ENCODE measurements at regions of chr19 and their contacts with region 1.

Region 1: DNA sequence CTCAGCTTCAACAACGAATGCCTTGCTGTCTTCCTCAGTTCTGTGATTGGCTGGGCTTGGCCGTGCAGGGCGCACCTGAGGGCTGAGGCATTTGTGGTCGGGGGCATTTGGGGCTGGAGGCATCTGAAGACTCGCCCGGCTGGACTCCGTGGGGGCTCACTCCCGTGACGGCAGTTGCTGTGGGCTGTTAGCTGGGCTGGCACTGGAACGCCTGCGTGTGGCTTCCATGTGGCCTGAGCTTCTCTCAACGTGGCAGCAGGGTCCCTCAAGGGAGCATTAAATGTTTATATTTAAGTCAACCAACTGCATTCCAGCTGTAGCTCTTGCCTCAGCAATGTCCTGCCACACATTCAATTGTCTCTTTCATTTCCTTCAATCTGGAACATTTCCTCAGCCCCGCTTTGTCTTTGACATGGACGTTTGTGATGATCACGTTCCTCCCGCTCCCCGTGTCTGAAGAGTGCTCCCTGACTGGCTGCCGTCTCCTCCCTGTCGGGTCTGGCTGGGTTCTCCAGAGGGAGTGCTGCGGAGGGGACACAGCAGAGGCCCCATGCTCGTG is 21.0 kb downstream of the CCDC8 start:
- DNase-seq: no peak
- H3K4me3 ChIP-seq: peak overlapping the region; percentile 22; the same call in 1 of the 2 replicates
- H3K27ac ChIP-seq: peak overlapping the region; percentile 78
- H3K27me3 ChIP-seq: no peaks in the 10 kb centered on the region
- CTCF ChIP-seq: no peak

Region 2: DNA sequence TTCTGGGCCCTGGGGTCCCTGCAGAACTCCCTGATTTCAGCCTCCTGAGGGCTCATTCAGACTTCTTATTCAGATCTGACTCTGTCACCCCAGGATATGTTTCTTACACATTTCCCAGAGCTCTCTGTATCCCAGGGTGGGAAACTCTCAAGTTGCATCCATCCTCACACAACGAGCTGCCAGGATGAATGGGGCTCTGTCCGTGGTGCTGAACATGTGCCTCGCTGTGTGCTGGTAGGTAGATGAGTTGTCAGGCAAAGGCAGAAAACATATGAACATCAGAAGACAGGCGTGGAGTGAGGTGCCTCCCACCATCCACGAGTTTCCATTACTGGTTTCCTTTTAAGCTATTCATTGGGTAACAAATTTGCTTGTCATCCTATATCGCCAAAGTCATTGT is 174.2 kb before region 1 on chr19:
- CTCF ChIA-PET with region 1: no interaction called
- POLR2A ChIA-PET with region 1: no interaction called
- DNase-seq: no peak
- H3K4me3 ChIP-seq: no peak overlapping the region
- H3K27ac ChIP-seq: no peak overlapping the region
- H3K27me3 ChIP-seq: peaks cover 6% of the 10 kb centered on the region
- CTCF ChIP-seq: no peak

Region 3: DNA sequence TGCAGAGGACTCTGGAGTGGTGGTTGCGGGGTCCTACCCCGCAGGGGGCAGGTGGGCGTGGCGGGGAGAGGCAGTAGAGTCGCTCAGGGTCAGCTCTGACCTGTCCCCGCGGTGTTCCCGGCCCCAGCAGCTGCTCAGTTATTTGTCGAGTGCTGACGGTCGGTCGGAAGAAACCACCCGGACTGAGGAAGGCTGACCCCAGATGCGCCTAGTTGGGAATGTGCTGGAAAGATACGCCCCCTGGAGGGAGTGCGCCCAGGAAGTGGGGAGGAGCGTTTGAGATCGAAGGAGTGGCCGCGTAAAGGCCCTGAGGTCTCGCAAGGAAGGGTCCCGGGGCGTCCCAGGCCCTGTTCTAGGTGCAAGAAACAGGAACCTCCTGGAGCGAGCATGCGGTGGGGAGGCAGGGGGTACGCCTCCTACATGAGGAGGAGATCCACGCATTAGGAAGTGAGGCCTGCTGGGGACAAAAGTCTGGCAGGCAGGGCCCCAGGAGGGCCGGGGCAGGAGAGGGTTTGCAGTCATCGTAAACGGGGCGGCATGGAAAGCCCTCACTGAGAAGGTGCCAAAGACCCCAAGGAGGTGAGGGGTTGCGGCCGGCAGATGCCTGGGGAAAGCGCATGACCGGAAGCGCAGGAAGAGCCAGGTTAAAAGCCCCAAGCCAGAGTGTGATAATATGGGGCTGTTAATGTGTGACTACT is 11.9 kb after region 1 on chr19:
- CTCF ChIA-PET with region 1: interaction called, 13 read pairs
- POLR2A ChIA-PET with region 1: interaction called, 6 read pairs
- DNase-seq: no peak
- H3K4me3 ChIP-seq: peak overlapping the region; percentile 47
- H3K27ac ChIP-seq: peak overlapping the region; percentile 31
- H3K27me3 ChIP-seq: no peaks in the 10 kb centered on the region
- CTCF ChIP-seq: peak; percentile 44

Region 4: GRCh38 chr19:46435009-46435408 is 42.7 kb after region 1 on chr19:
- CTCF ChIA-PET with region 1: interaction called, 14 read pairs
- POLR2A ChIA-PET with region 1: no interaction called
- DNase-seq: no peak
- H3K4me3 ChIP-seq: no peak overlapping the region
- H3K27ac ChIP-seq: no peak overlapping the region
- H3K27me3 ChIP-seq: no peaks in the 10 kb centered on the region
- CTCF ChIP-seq: no peak

Region 5: GRCh38 chr19:46487802-46488445 is 95.6 kb after region 1 on chr19:
- CTCF ChIA-PET with region 1: interaction called, 103 read pairs
- POLR2A ChIA-PET with region 1: no interaction called
- DNase-seq: no peak
- H3K4me3 ChIP-seq: peak overlapping the region; percentile 52
- H3K27ac ChIP-seq: no peak overlapping the region
- H3K27me3 ChIP-seq: peaks cover 38% of the 10 kb centered on the region
- CTCF ChIP-seq: peak; percentile 96

Region 6: DNA sequence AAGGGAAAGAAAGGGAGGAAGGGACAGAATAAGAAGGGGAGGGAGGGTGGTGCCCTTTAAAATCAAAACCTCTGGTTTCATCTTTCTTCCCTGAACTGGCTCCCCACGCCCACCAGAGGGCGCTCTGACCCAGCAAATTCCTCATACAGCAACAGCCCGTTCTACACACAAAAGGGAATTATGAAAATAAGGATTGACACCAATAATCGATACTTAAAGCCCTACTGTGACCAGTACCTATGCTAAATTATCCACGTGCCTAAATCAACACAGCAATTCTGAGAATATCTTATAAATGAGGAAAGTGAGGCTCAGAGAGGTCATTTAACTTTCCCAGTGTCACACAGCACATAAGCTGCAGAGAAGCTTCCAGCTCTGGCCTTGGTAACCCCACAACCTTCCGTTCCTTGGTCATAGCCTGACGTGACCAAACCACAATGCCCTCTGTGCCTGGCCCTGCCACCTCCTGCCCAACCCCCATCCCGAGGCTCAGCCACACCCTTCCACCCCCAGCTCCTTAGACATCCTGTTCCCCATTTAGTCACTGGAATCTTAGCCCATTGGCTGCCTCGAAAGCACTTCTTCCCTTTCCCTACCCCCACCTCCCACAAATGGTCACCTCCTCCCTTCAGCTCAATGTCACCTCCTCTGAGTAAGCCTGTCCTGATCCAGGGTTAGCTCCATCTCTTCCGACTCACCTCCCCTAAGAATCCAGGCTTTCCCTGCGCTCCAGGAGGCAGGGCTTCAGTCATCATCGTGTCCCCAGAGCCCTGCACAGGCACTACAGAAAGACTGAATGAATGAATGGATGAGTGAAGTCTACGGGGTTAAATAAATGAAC is 137.5 kb after region 1 on chr19:
- CTCF ChIA-PET with region 1: interaction called, 21 read pairs
- POLR2A ChIA-PET with region 1: no interaction called
- DNase-seq: no peak
- H3K4me3 ChIP-seq: no peak overlapping the region
- H3K27ac ChIP-seq: no peak overlapping the region
- H3K27me3 ChIP-seq: peaks cover 10% of the 10 kb centered on the region
- CTCF ChIP-seq: peak; percentile 96

Measured in AG04450 (cell line).